Activated CD8-positive, alpha-beta T cell treated with anti-CD3 and anti-CD28 coated beads, Interleukin-2, amount 10 ng/mL, durations not matched to agents 7 days and 5 days (primary cell): ENCODE measurements at regions of chrX and their contacts with region 1.

Region 1: GRCh38 chrX:24464836-24465531 is at the start of gene PDK3:
- DNase-seq: peak; percentile 88
- ATAC-seq: peak; percentile 96
- H3K4me3 Mint-ChIP-seq: peak within 1 kb of the TSS; percentile 76
- H3K27ac Mint-ChIP-seq: peak within 1 kb of the TSS; percentile 93
- H3K4me1 Mint-ChIP-seq: peaks cover 39% of the 10 kb centered on the region
- H3K27me3 Mint-ChIP-seq: no peaks in the 10 kb centered on the region
- total RNA-seq, gene PDK3: 30.0 to 31.5 TPM

Region 2: GRCh38 chrX:23737413-23737812 is 727.6 kb before region 1 on chrX:
- CTCF ChIA-PET with region 1: no interaction called
- POLR2A ChIA-PET with region 1: no interaction called
- DNase-seq: no peak
- ATAC-seq: no peak
- H3K4me3 Mint-ChIP-seq: no peak overlapping the region
- H3K27ac Mint-ChIP-seq: no peak overlapping the region
- H3K4me1 Mint-ChIP-seq: peaks cover 28% of the 10 kb centered on the region
- H3K27me3 Mint-ChIP-seq: no peaks in the 10 kb centered on the region

Region 3: GRCh38 chrX:24479924-24480323 is 14.9 kb after region 1 on chrX:
- CTCF ChIA-PET with region 1: interaction called, 6 read pairs
- POLR2A ChIA-PET with region 1: interaction called, 27 read pairs
- DNase-seq: peak; percentile 86
- ATAC-seq: peak; percentile 96
- H3K4me3 Mint-ChIP-seq: peak overlapping the region; percentile 77
- H3K27ac Mint-ChIP-seq: peak overlapping the region; percentile 93
- H3K4me1 Mint-ChIP-seq: peaks cover 68% of the 10 kb centered on the region
- H3K27me3 Mint-ChIP-seq: no peaks in the 10 kb centered on the region